Mammary epithelial cell (primary cell): ENCODE measurements at regions of chr9 and their contacts with region 1.

Region 1: GRCh38 chr9:88342246-88342645 is 46.0 kb upstream of the SPIN1 start:
- DNase-seq: peak; percentile 25
- H3K4me3 ChIP-seq: no peak overlapping the region
- H3K27ac ChIP-seq: no peak overlapping the region
- H3K4me1 ChIP-seq: peaks cover 18% of the 10 kb centered on the region
- H3K27me3 ChIP-seq: no peaks in the 10 kb centered on the region
- CTCF ChIP-seq: no peak

Region 2: DNA sequence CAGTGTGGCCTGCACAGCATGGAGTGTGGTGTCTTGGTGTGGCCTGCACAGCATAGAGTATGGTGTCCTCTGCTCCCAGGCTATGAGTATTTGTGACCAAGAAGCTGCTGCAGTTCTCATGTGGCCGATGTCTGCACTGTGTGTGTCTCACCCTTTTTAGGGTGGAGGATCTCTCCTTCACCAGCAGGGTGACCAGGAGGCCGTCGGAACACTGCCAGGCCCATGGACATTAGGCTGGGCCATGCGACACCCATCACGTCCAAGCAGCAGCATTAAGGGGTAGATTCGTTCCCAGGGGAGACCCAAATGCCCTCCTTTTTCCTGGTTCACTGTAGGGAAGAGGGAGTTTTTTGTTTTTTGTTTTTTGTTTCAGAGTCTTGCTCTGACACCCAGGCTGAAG is 69.3 kb before region 1 on chr9:
- CTCF ChIA-PET with region 1: no interaction called
- dilution Hi-C with region 1: no loop called
- in situ Hi-C with region 1: no loop called
- intact Hi-C with region 1: loop called (anchors 5 kb)
- DNase-seq: no peak
- H3K4me3 ChIP-seq: no peak overlapping the region
- H3K27ac ChIP-seq: no peak overlapping the region
- H3K4me1 ChIP-seq: peaks cover 16% of the 10 kb centered on the region
- H3K27me3 ChIP-seq: no peaks in the 10 kb centered on the region
- CTCF ChIP-seq: no peak